ENCODE measurements at regions of chr15 and their contacts with region 1.

Region 1: DNA sequence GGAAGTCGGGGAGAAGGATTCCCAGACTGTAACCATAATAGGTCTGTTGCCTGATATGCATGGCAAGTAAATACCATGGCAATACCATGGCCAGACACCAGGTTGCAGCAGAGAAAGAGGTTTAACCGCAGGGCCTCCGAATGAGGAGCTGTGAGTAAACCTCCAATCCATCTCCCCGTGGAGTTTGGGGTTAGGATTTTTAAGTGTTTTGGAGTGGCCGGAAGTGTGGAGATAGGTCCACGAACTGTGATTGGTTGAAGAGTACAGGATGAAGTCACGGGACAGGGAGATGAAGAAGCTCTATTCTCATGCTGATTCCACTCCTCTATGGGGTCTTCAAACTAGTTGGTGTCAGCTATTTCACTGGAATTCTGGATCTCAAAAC is 127.9 kb downstream of the ST8SIA2 start:
- DNase-seq: peak; percentile 37
- ATAC-seq: peak; percentile 97
- H3K4me3 ChIP-seq: no peak overlapping the region
- H3K27ac ChIP-seq: no peak overlapping the region
- H3K4me1 ChIP-seq: no peaks in the 10 kb centered on the region
- H3K27me3 ChIP-seq: no peaks in the 10 kb centered on the region
- CTCF ChIP-seq: peak; percentile 72 to 87 (median 75)
- EP300 ChIP-seq: no peak
- POLR2A ChIP-seq: no peak
- RAD21 ChIP-seq: peak; percentile 88

Region 2: DNA sequence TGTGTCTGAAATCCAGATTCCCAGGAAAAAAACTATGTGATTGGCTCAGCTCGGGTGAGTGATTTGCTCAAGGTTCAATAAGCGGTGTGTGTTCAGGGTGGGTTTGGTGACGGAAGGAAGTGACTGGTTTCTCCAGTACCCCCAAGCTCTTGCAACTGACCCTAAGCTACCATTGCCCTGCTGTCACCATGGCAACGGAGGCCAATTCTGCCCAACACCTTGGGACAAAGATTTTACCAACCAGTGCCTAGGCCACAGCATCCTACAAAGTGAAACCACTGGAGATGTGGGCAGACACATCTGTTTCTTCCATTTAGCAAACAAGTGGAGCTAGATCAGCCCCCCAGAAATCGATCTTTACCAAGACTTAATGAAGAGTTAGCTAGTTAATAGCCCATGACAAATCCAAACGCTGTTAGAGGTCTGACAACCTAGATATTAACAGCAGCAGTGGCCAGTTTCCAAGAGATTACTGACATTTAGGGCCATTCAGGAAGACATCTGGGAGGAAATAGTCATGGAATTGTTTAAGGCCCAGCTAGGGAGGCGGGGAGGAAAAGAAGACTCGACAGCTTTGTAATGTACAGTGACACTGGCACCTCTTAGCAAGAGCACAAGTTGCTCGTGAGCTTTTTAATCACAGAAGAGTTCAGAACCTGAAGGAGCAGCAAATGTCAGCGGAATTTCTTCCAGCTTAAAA is 472.2 kb before region 1 on chr15:
- CTCF ChIA-PET with region 1: no interaction called
- POLR2A ChIA-PET with region 1: no interaction called
- RAD21 ChIA-PET with region 1: no interaction called
- SMC1A ChIA-PET with region 1: no interaction called
- in situ Hi-C with region 1: no loop called
- intact Hi-C with region 1: no loop called
- DNase-seq: no peak
- ATAC-seq: no peak
- H3K4me3 ChIP-seq: no peak overlapping the region
- H3K27ac ChIP-seq: no peak overlapping the region
- H3K4me1 ChIP-seq: no peaks in the 10 kb centered on the region
- H3K27me3 ChIP-seq: no peaks in the 10 kb centered on the region; a peak in 1 of 4 replicates
- CTCF ChIP-seq: no peak
- EP300 ChIP-seq: no peak
- POLR2A ChIP-seq: no peak
- RAD21 ChIP-seq: no peak

Region 3: DNA sequence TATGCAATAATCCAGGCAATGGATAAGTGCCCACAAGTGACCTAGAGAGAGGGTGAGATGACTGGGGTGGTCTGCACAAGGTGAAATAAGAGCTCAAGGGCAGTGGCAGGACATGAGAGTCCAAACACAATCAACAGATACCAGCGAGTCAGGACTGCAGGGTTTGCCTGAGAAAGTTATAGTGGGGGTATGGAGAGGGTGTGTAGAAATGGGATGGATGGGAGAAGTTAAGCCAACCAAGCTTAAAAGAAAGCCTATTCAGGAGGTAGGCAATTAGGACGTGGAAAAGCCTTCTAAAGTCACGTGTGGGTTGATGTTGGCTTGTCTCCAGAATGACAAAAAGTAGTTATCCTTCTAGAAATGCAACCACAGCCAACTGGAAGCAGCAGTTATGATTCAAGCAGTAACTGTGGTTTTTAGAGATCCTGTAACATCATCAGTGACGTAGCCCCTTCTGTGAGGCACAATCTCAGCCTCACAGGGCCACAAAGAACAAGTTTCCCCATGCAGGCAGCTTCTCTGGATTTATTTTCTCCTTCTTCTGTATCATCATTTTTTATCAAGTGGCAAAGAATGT is 77.9 kb after region 1 on chr15:
- CTCF ChIA-PET with region 1: no interaction called
- POLR2A ChIA-PET with region 1: no interaction called
- RAD21 ChIA-PET with region 1: no interaction called
- SMC1A ChIA-PET with region 1: no interaction called
- in situ Hi-C with region 1: no loop called
- intact Hi-C with region 1: no loop called
- DNase-seq: no peak
- ATAC-seq: no peak
- H3K4me3 ChIP-seq: no peak overlapping the region
- H3K27ac ChIP-seq: no peak overlapping the region
- H3K4me1 ChIP-seq: no peaks in the 10 kb centered on the region
- H3K27me3 ChIP-seq: no peaks in the 10 kb centered on the region; a peak in 1 of 4 replicates
- CTCF ChIP-seq: no peak
- EP300 ChIP-seq: no peak
- POLR2A ChIP-seq: no peak
- RAD21 ChIP-seq: no peak

Region 4: DNA sequence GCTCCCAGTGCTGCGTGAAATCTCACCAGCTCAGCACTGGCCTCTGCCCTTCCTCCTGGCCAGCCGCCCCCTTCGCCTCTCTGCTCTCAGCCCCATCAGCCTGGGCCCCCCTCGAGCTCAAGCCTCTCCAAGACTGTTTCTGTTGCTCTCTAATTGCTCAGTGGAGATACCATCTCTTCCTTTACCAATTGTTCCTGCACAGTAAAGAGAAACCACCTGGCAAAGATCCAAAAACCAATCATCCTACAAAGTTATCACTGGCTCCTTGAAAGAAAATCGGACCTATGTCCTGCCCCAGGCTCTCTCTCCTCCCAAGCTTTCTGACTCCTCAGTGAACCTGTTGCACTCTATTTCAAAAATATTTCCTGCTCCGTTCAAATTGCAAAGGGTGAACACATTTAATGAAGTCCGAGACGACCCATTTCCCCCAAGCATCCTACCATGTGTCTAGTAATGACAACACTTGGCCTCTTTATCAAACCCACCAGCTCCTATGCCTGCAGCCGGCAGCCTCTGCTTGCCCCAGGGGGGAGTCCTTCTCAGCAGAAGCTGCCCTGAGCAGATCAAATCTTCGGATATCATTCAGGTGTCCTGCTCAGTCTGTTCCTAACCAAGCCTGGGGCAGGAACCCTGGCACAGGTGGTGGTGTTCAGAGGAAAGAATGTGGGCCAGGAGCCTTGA is 187.6 kb after region 1 on chr15:
- CTCF ChIA-PET with region 1: interaction called, 95 read pairs
- POLR2A ChIA-PET with region 1: no interaction called
- RAD21 ChIA-PET with region 1: interaction called, 40 read pairs
- SMC1A ChIA-PET with region 1: interaction called, 29 read pairs
- in situ Hi-C with region 1: loop called (anchors 5 kb)
- intact Hi-C with region 1: loop called (anchors 1 kb)
- DNase-seq: no peak
- ATAC-seq: no peak
- H3K4me3 ChIP-seq: no peak overlapping the region
- H3K27ac ChIP-seq: no peak overlapping the region
- H3K4me1 ChIP-seq: no peaks in the 10 kb centered on the region
- H3K27me3 ChIP-seq: peaks cover 0 to 3% of the 10 kb centered on the region in 2 experiments; a peak in 1 of 4 replicates
- CTCF ChIP-seq: no peak
- EP300 ChIP-seq: no peak
- POLR2A ChIP-seq: no peak
- RAD21 ChIP-seq: no peak

Measured in GM12878 (cell line).